ENCODE measurements at regions of chr2 and their contacts with region 1.

Region 1: GRCh38 chr2:236507393-236508085 is 62.1 kb upstream of the ACKR3 start:
- DNase-seq: no peak
- H3K4me3 ChIP-seq: peak overlapping the region; percentile 38 to 50
- H3K27ac ChIP-seq: no peak overlapping the region
- H3K4me1 ChIP-seq: peaks cover 13% of the 10 kb centered on the region
- H3K27me3 ChIP-seq: no peaks in the 10 kb centered on the region
- CTCF ChIP-seq: no peak
- POLR2A ChIP-seq: no peak

Region 2: GRCh38 chr2:237026981-237027711 is 519.6 kb after region 1 on chr2:
- intact Hi-C with region 1: loop called (anchors 10 kb)
- DNase-seq: no peak
- H3K4me3 ChIP-seq: no peak overlapping the region
- H3K27ac ChIP-seq: no peak overlapping the region
- H3K4me1 ChIP-seq: no peaks in the 10 kb centered on the region
- H3K27me3 ChIP-seq: no peaks in the 10 kb centered on the region
- CTCF ChIP-seq: peak; percentile 52 to 88 (median 87)
- POLR2A ChIP-seq: no peak

Region 3: GRCh38 chr2:237581751-237582746 is 1074.5 kb after region 1 on chr2:
- intact Hi-C with region 1: no loop called
- DNase-seq: peak in 1 of 2 donors; percentile 92
- H3K4me3 ChIP-seq: no peak overlapping the region
- H3K27ac ChIP-seq: peak overlapping the region; percentile 61
- H3K4me1 ChIP-seq: peaks cover 12% of the 10 kb centered on the region
- H3K27me3 ChIP-seq: no peaks in the 10 kb centered on the region
- CTCF ChIP-seq: peak in 2 of 3 experiments; percentile 7 to 52
- POLR2A ChIP-seq: no peak